Natural killer cell (primary cell): ENCODE measurements at regions of chr12 and their contacts with region 1.

Region 1: DNA sequence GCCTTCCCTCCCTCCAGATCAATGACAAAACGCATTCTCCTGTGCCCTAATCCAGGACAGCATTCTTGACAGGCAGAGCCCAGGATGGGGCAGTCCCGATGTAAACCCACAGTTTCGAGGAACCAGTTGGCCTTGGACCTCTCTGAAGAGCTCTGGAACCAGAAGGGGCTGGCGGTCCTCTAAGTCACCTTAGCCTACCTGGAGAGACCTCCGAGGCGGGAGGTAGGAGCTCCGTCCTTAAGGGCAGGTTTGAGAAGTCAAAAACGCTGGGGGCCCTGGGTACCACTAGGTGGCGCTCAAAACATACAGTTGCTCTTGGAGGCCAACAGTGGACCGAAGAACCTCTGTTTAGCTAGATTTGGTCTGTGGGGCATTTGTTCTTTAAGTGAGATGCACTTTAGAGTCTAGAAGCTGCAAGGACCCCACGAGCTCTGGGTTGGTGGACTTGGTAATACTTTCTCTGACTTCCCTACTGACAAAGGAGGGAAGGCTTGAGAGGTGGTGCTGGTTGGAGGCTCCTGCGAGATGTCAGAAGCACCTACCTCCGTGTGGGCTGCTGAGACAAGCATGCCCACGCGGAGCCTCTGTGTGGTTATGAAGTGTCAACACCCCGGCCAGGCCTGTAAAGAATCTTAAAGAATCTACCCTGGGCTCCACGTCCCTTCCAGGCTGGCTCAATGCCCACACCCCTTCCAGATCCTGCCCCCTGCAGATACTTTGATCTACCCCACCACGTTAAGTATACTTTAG is 74.8 kb upstream of the CHST11 start:
- DNase-seq: peak; percentile 73 to 92
- ATAC-seq: peak; percentile 88 to 94 (median 91)
- H3K4me3 ChIP-seq: no peak overlapping the region
- H3K4me3 Mint-ChIP-seq: no peak overlapping the region
- H3K27ac ChIP-seq: no peak overlapping the region
- H3K27ac Mint-ChIP-seq: peak overlapping the region in 1 of 2 donors; percentile 75
- H3K4me1 ChIP-seq: peaks cover 9% of the 10 kb centered on the region
- H3K4me1 Mint-ChIP-seq: peaks cover 11 to 18% of the 10 kb centered on the region in 2 donors
- H3K27me3 ChIP-seq: peaks cover 3% of the 10 kb centered on the region
- H3K27me3 Mint-ChIP-seq: peaks cover 6 to 7% of the 10 kb centered on the region in 2 donors
- CTCF ChIP-seq: peak; percentile 97

Region 2: DNA sequence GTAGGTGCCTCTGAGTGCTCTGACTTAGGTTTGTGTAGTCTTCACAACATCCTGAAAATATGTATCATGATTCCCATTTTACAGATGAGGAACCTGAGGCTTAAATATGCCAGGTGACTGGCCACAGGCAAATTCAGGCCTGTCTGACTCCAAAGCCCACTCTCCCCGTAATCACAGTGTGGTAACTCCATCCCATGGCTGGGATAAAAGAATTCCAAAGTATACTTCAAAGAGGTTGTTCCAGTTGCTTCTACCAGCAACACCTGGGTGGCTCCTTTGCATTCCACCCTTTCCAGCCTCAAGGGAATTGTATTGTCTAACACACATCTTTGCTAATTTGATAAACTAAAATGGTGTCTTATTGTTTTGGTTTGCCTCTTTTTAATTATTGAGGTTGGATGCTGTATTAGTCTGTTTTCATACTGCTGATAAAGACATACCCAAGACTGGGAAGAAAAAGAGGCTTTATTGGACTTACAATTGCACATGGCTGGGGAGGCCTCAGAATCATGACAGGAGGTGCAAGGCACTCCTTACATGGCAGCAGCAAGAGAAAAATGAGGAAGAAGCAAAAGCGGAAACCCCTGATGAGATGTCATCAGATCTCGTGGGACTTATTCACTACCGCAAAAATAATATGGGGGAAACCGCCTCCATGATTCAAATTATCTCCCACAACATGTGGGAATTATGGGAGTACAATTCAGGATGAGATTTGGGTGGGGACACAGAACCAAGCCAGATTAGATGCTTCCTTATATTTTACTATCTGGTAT is 64.9 kb after region 1 on chr12:
- intact Hi-C with region 1: no loop called
- DNase-seq: no peak
- ATAC-seq: no peak
- H3K4me3 ChIP-seq: no peak overlapping the region
- H3K4me3 Mint-ChIP-seq: no peak overlapping the region
- H3K27ac ChIP-seq: no peak overlapping the region
- H3K27ac Mint-ChIP-seq: no peak overlapping the region
- H3K4me1 ChIP-seq: no peaks in the 10 kb centered on the region
- H3K4me1 Mint-ChIP-seq: no peaks in the 10 kb centered on the region
- H3K27me3 ChIP-seq: no peaks in the 10 kb centered on the region
- H3K27me3 Mint-ChIP-seq: peaks cover 10 to 14% of the 10 kb centered on the region in 2 donors
- CTCF ChIP-seq: no peak

Region 3: DNA sequence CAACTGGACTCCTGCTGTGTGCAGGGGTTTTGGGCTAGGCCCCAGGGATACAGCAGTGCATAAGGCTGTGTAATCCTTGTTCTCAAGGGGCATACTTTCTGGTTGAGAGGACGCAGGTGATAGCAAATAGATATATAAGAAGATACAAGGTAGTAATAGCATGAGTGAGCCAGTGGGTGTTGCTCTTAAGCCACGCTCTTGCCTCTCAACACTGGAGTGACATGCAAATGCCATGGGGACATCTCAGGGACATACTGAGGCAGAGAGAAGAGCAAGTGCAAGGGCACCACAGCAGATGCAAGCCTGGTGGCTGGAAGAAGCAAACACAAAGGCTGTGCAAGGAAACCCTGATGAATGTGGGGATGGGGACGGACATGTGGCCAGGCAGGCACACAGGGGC is 298.2 kb after region 1 on chr12:
- intact Hi-C with region 1: loop called (anchors 5 kb)
- DNase-seq: peak in 1 of 2 donors; percentile 69
- ATAC-seq: peak; percentile 36 to 49 (median 46)
- H3K4me3 ChIP-seq: no peak overlapping the region
- H3K4me3 Mint-ChIP-seq: no peak overlapping the region
- H3K27ac ChIP-seq: no peak overlapping the region
- H3K27ac Mint-ChIP-seq: peak overlapping the region; percentile 65 to 93
- H3K4me1 ChIP-seq: peaks cover 49% of the 10 kb centered on the region
- H3K4me1 Mint-ChIP-seq: peaks cover 81 to 82% of the 10 kb centered on the region in 2 donors
- H3K27me3 ChIP-seq: no peaks in the 10 kb centered on the region
- H3K27me3 Mint-ChIP-seq: no peaks in the 10 kb centered on the region
- CTCF ChIP-seq: peak; percentile 29